Gastrocnemius medialis (tissue), 4 donors: ENCODE measurements at regions of chr9 and their contacts with region 1.

Region 1: GRCh38 chr9:16871356-16872151 is 1.1 kb upstream of the BNC2 start:
- DNase-seq: peak in 1 of 2 donors; percentile 35
- ATAC-seq: peak; percentile 24 to 34
- H3K4me3 ChIP-seq: peak overlapping the region; percentile 71 to 85 (median 76)
- H3K27ac ChIP-seq: peak overlapping the region; percentile 80 to 90 (median 84)
- H3K4me1 ChIP-seq: peaks cover 3 to 9% of the 10 kb centered on the region in 2 donors
- H3K27me3 ChIP-seq: peaks cover 0 to 4% (median 0%) of the 10 kb centered on the region in 3 donors
- CTCF ChIP-seq: no peak
- POLR2A ChIP-seq: peak; percentile 10 to 27

Region 2: DNA sequence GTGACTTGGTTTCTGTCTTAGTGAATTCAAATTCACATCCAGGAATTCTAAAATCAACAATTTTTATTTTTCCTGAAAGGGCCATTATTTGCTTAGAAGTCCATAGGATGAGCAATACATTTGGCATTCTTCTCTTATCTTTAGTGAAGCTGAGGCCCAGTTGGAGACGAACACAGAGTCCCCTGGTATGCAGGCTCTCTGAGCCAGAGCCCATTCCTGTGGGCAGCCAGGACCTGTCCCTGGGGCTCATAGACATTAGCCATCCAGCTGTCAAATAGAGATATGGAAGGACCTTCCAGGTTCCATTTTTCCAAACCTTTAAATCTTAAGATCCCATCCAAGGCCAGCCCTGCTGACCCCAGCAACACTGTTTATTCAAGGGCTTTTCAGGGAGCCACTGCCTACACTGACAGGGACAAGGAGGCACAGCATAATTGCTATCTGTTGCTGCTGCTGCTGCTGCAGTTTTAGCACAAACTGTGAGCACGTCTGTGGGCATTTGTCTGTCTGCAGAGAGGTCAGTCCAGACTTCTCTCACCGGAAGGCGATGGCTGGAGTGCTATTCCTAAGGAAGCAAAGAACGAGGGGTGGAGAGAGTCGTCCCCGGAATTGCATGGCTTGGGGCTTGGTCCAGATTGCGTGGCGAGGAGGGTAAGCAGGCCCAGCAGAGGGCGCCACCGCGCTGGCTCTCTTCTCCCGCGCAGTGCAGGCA is 679.7 kb before region 1 on chr9:
- in situ Hi-C with region 1: no loop called
- intact Hi-C with region 1: loop called (anchors 10 kb)
- DNase-seq: peak; percentile 28 to 55
- ATAC-seq: peak; percentile 66 to 68
- H3K4me3 ChIP-seq: no peak overlapping the region
- H3K27ac ChIP-seq: no peak overlapping the region
- H3K4me1 ChIP-seq: peaks cover 3% of the 10 kb centered on the region in 2 donors
- H3K27me3 ChIP-seq: no peaks in the 10 kb centered on the region
- CTCF ChIP-seq: peak; percentile 16 to 78 (median 70)
- POLR2A ChIP-seq: no peak

Region 3: GRCh38 chr9:16571127-16571802 is 300.3 kb before region 1 on chr9:
- in situ Hi-C with region 1: no loop called
- intact Hi-C with region 1: loop called (anchors 5 kb)
- DNase-seq: no peak
- ATAC-seq: peak; percentile 53 to 58
- H3K4me3 ChIP-seq: peak overlapping the region; percentile 7 to 37 (median 16)
- H3K27ac ChIP-seq: peak overlapping the region in 1 of 4 donors; percentile 11
- H3K4me1 ChIP-seq: peaks cover 4 to 7% of the 10 kb centered on the region in 2 donors
- H3K27me3 ChIP-seq: no peaks in the 10 kb centered on the region
- CTCF ChIP-seq: no peak
- POLR2A ChIP-seq: no peak

Region 4: GRCh38 chr9:16784002-16784401 is 87.6 kb before region 1 on chr9:
- in situ Hi-C with region 1: no loop called
- intact Hi-C with region 1: no loop called
- DNase-seq: no peak
- ATAC-seq: no peak
- H3K4me3 ChIP-seq: no peak overlapping the region
- H3K27ac ChIP-seq: no peak overlapping the region
- H3K4me1 ChIP-seq: no peaks in the 10 kb centered on the region
- H3K27me3 ChIP-seq: no peaks in the 10 kb centered on the region
- CTCF ChIP-seq: no peak
- POLR2A ChIP-seq: no peak

Region 5: DNA sequence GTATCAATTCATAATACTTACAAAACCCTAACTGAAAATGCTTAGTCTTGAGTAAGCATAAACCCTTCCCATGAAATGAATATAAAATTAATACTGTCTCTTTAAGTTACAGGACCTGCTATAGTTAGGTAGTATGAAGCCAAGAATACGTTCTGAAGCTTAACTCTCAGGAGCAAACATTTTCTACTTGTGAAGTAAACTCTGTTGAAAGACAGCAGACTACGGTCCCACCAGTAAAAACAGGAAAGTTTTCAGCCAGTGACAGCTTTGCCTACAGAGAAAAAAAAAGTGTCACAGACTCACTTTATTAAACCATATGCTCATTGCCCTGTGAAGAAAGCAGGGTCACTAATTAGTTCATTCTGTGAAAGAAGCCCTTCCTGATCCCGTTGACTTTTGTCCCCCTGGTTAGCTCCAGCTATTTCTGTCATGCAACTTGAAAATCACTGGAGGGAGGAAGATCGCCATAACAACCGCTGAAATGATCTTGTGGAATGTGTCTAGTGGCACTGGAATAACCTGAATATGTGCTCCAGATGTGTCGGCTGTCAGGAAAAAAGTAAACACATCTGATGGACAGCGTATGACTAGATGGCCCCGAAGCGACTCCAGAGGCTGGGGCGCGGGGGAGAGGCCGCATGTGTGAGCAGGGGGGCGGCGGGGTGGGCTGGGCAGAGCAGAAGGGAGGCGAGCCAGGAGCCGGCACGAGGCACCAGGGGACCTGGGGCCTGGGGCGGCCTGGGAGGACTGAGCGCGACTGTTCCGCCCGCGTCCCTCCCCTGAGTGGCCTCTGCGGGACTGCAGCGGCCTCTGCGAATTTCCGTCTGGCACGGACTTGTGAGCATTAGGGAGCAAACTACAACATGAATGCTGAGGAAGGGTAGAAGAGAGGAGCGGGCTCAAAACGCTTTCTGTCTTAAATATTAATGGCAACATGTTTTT is 42.9 kb before region 1 on chr9:
- in situ Hi-C with region 1: no loop called
- intact Hi-C with region 1: loop called (anchors 5 kb)
- DNase-seq: peak; percentile 4 to 28
- ATAC-seq: peak; percentile 19 to 64
- H3K4me3 ChIP-seq: peak overlapping the region; percentile 45 to 58 (median 48)
- H3K27ac ChIP-seq: peak overlapping the region; percentile 59 to 75 (median 70)
- H3K4me1 ChIP-seq: peaks cover 13 to 17% of the 10 kb centered on the region in 2 donors
- H3K27me3 ChIP-seq: no peaks in the 10 kb centered on the region
- CTCF ChIP-seq: no peak
- POLR2A ChIP-seq: no peak

Region 6: DNA sequence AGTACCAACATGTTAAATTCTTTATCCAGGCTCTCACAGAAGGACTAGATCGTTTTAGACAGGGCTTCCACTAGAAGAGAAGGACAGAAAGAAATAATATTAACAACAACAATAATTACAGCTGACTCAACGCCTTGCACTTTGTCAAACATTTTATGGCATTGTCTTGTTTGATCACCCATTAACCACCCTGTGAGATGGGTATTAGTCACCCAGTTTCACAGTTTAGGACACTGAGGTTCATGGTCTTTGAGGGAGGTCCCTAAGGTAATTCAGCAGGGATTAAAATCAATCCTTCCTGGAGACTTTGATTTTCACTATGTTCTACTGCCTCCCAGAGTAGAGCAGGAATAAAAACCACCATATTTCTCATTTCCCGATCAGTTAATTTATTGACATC is 50.3 kb after region 1 on chr9:
- in situ Hi-C with region 1: no loop called
- intact Hi-C with region 1: no loop called
- DNase-seq: no peak
- ATAC-seq: no peak
- H3K4me3 ChIP-seq: no peak overlapping the region
- H3K27ac ChIP-seq: no peak overlapping the region
- H3K4me1 ChIP-seq: no peaks in the 10 kb centered on the region
- H3K27me3 ChIP-seq: no peaks in the 10 kb centered on the region
- CTCF ChIP-seq: no peak
- POLR2A ChIP-seq: no peak

Region 7: DNA sequence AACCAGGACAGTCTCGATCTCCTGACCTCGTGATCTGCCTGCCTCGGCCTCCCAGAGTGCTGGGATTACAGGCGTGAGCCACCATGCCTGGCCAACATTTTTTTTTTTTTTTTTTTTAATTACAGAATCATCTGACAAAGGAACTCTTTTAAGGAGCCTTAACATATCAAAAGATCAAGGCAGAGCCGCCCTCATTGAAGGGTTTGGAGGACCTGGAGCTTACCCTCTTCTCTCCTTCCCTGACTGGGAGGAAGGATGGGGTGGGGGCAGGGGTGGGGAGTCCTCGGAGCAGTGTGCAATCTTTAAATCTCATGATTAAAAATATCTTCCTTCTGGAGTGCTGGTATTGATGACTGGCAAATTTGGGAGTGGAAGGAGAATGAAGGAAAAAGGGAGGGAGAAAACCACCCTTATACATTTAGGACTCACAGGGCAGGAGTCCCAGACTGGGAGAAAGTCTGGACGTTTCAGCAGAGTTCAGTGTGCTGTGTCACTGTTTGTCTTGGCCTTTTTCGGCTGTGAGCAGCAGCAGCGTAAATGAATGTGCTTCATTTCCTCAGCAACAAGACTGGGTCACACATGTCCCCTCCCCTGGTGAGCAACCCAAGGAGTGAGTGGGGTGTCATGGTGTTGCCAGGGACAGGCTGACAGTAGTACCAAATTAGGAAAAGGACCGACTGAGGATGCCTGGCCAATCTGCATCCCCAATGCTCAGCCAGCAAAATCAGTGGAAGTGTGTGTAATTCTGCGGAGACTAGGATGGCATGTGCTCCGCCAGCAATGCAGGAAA is 114.2 kb after region 1 on chr9:
- in situ Hi-C with region 1: no loop called
- intact Hi-C with region 1: no loop called
- DNase-seq: no peak
- ATAC-seq: peak in 1 of 2 donors; percentile 18
- H3K4me3 ChIP-seq: no peak overlapping the region
- H3K27ac ChIP-seq: no peak overlapping the region
- H3K4me1 ChIP-seq: no peaks in the 10 kb centered on the region
- H3K27me3 ChIP-seq: no peaks in the 10 kb centered on the region
- CTCF ChIP-seq: no peak
- POLR2A ChIP-seq: no peak

Region 8: GRCh38 chr9:17134396-17135294 is 263.1 kb after region 1 on chr9 and contains the start of gene CNTLN:
- in situ Hi-C with region 1: no loop called
- intact Hi-C with region 1: loop called (anchors 10 kb)
- DNase-seq: peak; percentile 71 to 80
- ATAC-seq: peak; percentile 88 to 92
- H3K4me3 ChIP-seq: peak within 1 kb of the TSS; percentile 70 to 93 (median 83)
- H3K27ac ChIP-seq: peak within 1 kb of the TSS; percentile 78 to 85 (median 82)
- H3K4me1 ChIP-seq: peaks cover 5 to 10% of the 10 kb centered on the region in 2 donors
- H3K27me3 ChIP-seq: no peaks in the 10 kb centered on the region
- CTCF ChIP-seq: peak in 1 of 5 experiments; percentile 8
- POLR2A ChIP-seq: peak; percentile 48 to 58
- total RNA-seq, gene CNTLN: 1.3 to 6.6 (median 2.4) TPM